HEK293 (cell line): ENCODE measurements at regions of chr5 and their contacts with region 1.

Region 1: GRCh38 chr5:178204182-178204894 is at the start of gene HNRNPAB:
- H3K4me3 ChIP-seq: peak within 1 kb of the TSS; percentile 68
- H3K27ac ChIP-seq: peak within 1 kb of the TSS; percentile 98
- H3K4me1 ChIP-seq: peaks cover 6% of the 10 kb centered on the region; the same call in 1 of the 2 replicates
- CTCF ChIP-seq: no peak

Region 2: DNA sequence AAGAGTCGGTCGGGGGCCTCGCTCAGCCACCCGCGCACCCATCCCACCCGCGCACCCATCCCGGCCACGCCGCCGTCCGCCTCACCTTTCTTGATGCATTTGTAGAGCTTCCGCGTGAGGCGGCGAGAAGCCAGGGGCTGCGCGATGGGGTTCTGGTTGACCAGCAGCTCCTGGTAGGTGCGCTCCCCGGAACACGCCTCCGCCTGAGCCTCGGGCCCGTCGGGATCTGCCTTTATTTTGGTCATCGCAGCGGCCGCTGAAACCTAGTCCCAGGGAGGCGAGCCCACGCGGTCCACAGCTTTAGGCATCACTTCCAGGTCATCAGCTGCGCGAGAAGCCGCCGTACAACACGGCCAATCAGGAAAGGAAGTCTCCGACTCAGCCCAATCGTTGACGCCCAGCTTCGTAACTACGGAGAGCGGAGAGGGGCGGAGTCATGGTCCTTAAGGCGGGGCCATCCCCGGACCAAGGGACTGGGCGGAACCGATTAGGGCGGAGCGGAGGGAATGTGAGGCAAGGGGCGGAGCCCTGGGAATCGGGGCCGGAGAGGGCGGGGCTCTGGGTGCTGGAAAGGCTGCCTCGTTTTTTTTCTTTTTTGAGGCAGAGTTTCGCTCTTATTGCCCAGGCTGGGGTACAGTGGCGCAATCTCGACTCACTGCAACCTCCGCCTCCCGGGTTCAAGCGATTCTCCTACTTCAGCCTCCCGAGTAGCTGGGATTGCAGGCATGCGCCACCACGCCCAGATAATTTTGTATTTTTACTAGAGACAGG is 50.6 kb before region 1 on chr5 and contains the start of gene NHP2:
- CTCF ChIA-PET with region 1: no interaction called
- POLR2A ChIA-PET with region 1: interaction called, 35 read pairs
- H3K4me3 ChIP-seq: peak within 1 kb of the TSS; percentile 90
- H3K27ac ChIP-seq: peak within 1 kb of the TSS; percentile 13; the same call in 1 of the 2 replicates
- H3K4me1 ChIP-seq: peaks cover 4% of the 10 kb centered on the region; the same call in 1 of the 2 replicates
- CTCF ChIP-seq: no peak

Region 3: GRCh38 chr5:178182158-178182876 is 22.0 kb before region 1 on chr5:
- CTCF ChIA-PET with region 1: interaction called, 3 read pairs
- POLR2A ChIA-PET with region 1: interaction called, 18 read pairs
- H3K4me3 ChIP-seq: no peak overlapping the region
- H3K27ac ChIP-seq: no peak overlapping the region
- H3K4me1 ChIP-seq: no peaks in the 10 kb centered on the region
- CTCF ChIP-seq: no peak

Region 4: DNA sequence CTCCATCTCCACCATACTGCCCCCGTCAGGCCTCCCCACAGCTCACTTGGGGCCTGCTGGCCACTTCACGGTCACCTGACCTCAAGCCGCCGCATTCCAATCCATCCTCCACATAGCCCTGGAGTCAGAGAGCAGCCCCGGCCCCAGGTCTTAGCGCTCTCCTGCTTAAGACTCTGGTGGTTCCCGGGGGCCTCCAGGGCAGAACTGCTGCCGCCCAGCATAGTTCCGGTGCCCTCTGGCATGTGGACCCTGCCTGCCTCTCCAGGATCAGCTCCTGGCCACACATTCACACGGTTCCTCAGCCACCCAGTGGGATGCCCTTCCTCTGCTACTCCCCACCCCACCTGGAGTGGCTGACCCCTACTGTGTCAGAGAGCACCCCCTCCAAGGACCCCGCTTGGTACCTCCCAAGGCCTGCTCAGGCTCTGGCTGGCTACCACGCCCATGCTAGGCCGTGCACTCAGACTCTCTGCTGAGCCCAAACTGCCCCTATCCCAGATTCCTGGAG is 19.5 kb after region 1 on chr5:
- CTCF ChIA-PET with region 1: no interaction called
- POLR2A ChIA-PET with region 1: interaction called, 20 read pairs
- H3K4me3 ChIP-seq: no peak overlapping the region
- H3K27ac ChIP-seq: no peak overlapping the region
- H3K4me1 ChIP-seq: no peaks in the 10 kb centered on the region
- CTCF ChIP-seq: no peak

Region 5: GRCh38 chr5:178232124-178232919 is 28.0 kb after region 1 on chr5 and contains the start of gene PHYKPL:
- CTCF ChIA-PET with region 1: interaction called, 6 read pairs
- POLR2A ChIA-PET with region 1: interaction called, 28 read pairs
- H3K4me3 ChIP-seq: peak within 1 kb of the TSS; percentile 76
- H3K27ac ChIP-seq: peak within 1 kb of the TSS; percentile 92
- H3K4me1 ChIP-seq: no peaks in the 10 kb centered on the region
- CTCF ChIP-seq: peak; percentile 67

Region 6: GRCh38 chr5:178259623-178260536 is 55.5 kb after region 1 on chr5:
- CTCF ChIA-PET with region 1: no interaction called
- POLR2A ChIA-PET with region 1: no interaction called
- H3K4me3 ChIP-seq: no peak overlapping the region
- H3K27ac ChIP-seq: no peak overlapping the region
- H3K4me1 ChIP-seq: no peaks in the 10 kb centered on the region
- CTCF ChIP-seq: no peak